ENCODE measurements at regions of chr5 and their contacts with region 1.

Region 1: GRCh38 chr5:179732417-179732917 is at the start of gene MAML1:
- DNase-seq: peak; percentile 100
- ATAC-seq: peak; percentile 94 to 96
- H3K4me3 ChIP-seq: peak within 1 kb of the TSS; percentile 59 to 86 (median 72)
- H3K27ac ChIP-seq: peak within 1 kb of the TSS; percentile 79 to 97 (median 92)
- H3K4me1 ChIP-seq: peaks cover 37 to 40% of the 10 kb centered on the region in 2 donors
- H3K27me3 ChIP-seq: no peaks in the 10 kb centered on the region
- CTCF ChIP-seq: no peak
- POLR2A ChIP-seq: peak; percentile 63 to 77
- total RNA-seq, gene MAML1: 14.4 to 16.3 (median 15.1) TPM

Region 2: GRCh38 chr5:179678223-179679013 is 54.0 kb before region 1 on chr5:
- in situ Hi-C with region 1: no loop called
- intact Hi-C with region 1: loop called (anchors 1 kb)
- DNase-seq: peak; percentile 89 to 94
- ATAC-seq: peak; percentile 96 to 97
- H3K4me3 ChIP-seq: peak overlapping the region; percentile 77 to 100 (median 84)
- H3K27ac ChIP-seq: peak overlapping the region; percentile 88 to 99 (median 92)
- H3K4me1 ChIP-seq: peaks cover 9 to 12% of the 10 kb centered on the region in 2 donors
- H3K27me3 ChIP-seq: no peaks in the 10 kb centered on the region
- CTCF ChIP-seq: peak in 2 of 5 experiments; percentile 21 to 25
- POLR2A ChIP-seq: peak; percentile 76 to 77

Region 3: DNA sequence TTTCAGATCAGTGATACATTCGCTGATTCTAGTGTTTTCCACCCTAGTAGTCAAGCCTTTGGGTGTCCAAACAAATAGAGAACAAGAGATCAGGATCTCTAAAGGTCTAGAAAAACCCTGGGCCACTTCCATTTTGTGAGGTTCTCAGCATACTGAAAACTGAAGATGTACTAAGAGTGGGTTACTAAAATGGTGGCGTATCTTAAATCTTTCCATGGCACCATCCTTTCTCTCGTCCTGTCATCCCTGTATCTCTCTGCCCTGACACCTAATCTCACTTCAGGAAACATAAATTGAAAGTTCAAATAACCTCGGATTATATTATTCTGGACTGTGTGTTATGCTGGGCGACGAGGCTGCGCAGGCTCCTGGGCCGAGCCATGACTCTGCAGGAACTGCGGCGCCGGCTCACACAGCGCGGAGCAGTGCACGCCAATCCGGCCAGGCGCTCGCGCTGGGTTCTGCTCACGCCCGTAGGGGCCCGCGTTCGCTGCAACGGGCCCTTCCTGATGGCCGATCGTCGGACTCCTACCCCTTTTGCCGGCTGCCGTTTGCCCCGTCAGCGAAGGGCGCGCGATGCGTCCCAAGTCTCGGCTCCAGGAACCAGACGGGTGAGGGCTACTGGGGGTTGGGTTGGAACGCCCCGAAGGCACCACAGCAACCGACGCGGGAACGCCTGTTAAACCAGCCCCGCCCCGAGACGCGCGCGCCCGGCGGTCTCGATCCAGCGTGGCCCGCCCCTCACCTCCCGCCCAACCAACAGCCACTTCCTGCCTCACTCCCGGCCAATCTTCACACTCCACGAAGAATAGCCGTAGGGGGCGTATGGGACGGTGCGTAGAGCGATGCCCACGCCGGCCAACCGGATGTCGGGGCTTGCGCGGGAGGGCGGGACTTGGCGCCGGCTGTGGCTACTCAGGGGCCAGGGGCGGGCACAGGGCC is 34.2 kb before region 1 on chr5:
- in situ Hi-C with region 1: no loop called
- intact Hi-C with region 1: loop called (anchors 1 kb)
- DNase-seq: peak; percentile 99 to 100
- ATAC-seq: peak; percentile 90 to 96
- H3K4me3 ChIP-seq: peak overlapping the region; percentile 83 to 99 (median 88)
- H3K27ac ChIP-seq: peak overlapping the region; percentile 93 to 100 (median 98)
- H3K4me1 ChIP-seq: peaks cover 21 to 28% of the 10 kb centered on the region in 2 donors
- H3K27me3 ChIP-seq: no peaks in the 10 kb centered on the region
- CTCF ChIP-seq: no peak
- POLR2A ChIP-seq: peak; percentile 90 to 91

Region 4: DNA sequence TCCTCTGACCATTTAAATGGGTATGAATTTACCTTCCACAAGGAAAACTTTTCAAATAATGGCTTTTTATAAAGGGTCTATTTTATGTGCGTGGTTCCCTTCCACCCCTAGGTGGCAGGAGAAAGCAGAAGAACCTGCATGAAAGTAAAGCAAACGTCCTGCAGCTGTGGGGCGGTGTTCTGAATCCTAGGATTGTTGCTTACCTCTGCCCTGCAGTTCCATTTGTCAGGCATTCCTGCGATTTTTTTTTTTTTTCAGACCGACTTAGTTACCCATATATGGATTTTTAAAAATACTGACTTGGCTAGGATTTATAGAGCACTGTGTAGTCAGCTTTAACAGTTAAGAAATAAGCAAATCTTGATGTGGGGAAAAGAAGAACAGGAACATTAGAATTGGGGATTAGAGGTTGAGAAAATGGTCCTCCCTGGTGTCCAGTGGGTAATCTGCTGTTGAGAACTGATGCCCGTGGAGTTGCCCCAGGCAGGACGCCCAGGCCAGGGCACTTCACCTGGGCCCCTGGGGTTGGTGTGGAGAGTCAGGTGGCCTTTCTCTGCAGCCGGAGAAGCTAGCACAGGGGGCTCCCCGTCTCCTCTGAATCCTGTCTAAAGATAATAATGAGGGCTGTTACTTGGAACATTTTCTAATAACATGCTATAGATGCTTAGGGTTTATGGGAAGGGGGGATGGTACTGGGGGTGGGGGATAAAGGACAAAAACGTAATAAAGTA is 30.9 kb after region 1 on chr5:
- in situ Hi-C with region 1: no loop called
- intact Hi-C with region 1: loop called (anchors 2 kb)
- DNase-seq: peak; percentile 23 to 51
- ATAC-seq: peak; percentile 81 to 82
- H3K4me3 ChIP-seq: no peak overlapping the region
- H3K27ac ChIP-seq: peak overlapping the region; percentile 18 to 48 (median 26)
- H3K4me1 ChIP-seq: peaks cover 56 to 57% of the 10 kb centered on the region in 2 donors
- H3K27me3 ChIP-seq: no peaks in the 10 kb centered on the region
- CTCF ChIP-seq: peak; percentile 68 to 89 (median 74)
- POLR2A ChIP-seq: no peak

Region 5: DNA sequence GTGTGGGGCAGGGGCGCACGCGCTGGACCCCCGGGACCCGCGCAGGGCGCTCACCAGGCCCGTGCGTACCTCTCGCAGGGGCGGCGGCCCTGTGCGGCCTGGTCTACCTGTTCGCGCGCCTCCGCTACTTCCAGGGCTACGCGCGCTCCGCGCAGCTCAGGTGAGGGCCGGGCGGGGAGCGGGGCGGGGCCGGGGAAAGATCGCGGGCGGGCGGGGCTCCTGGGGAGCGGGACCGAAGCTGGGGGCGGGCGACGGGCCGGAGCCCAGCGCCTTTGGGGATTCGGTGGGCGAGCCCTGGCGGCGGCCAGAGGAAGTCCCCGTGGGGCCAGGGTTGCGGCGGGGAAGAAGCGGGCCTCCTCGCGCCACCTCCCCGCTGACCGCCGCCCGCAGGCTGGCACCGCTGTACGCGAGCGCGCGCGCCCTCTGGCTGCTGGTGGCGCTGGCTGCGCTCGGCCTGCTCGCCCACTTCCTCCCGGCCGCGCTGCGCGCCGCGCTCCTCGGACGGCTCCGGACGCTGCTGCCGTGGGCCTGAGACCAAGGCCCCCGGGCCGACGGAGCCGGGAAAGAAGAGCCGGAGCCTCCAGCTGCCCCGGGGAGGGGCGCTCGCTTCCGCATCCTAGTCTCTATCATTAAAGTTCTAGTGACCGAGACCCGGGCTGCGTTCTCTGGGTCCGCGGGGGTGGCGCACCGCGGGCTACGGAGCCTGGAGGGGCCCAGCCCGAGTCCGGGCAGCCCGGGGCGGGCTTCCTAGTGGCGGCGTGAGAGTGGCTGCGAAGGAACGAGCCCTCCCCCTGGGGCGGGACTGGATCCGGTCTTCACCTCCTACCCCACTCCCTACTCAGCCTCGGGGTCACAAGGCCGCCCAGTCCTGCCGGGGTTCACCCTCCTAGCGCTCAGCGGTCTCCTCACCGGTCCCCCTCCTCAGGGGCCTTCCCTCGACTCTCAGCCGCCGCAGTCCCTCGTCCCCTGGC is 63.7 kb after region 1 on chr5:
- in situ Hi-C with region 1: no loop called
- intact Hi-C with region 1: loop called (anchors 5 kb)
- DNase-seq: peak in 1 of 2 donors; percentile 68
- ATAC-seq: peak; percentile 74 to 84
- H3K4me3 ChIP-seq: peak overlapping the region; percentile 55 to 65 (median 60)
- H3K27ac ChIP-seq: peak overlapping the region; percentile 62 to 81 (median 76)
- H3K4me1 ChIP-seq: peaks cover 17 to 22% of the 10 kb centered on the region in 2 donors
- H3K27me3 ChIP-seq: no peaks in the 10 kb centered on the region
- CTCF ChIP-seq: peak; percentile 60 to 95 (median 84)
- POLR2A ChIP-seq: peak; percentile 45 to 46